Activated CD4-positive, alpha-beta T cell treated with anti-CD3 and anti-CD28 coated beads for 36 hours (primary cell): ENCODE measurements at regions of chr3 and their contacts with region 1.

Region 1: GRCh38 chr3:129249276-129250065 is at the start of gene COPG1:
- DNase-seq: peak; percentile 91
- ATAC-seq: peak; percentile 92
- H3K4me3 Mint-ChIP-seq: peak within 1 kb of the TSS; percentile 96
- H3K27ac Mint-ChIP-seq: peak within 1 kb of the TSS; percentile 96
- H3K4me1 Mint-ChIP-seq: peaks cover 32% of the 10 kb centered on the region
- H3K27me3 Mint-ChIP-seq: no peaks in the 10 kb centered on the region
- total RNA-seq, gene COPG1: 120 to 142 TPM

Region 2: GRCh38 chr3:128993461-128994173 is 255.9 kb before region 1 on chr3 and contains the start of gene CFAP92:
- CTCF ChIA-PET with region 1: interaction called, 3 read pairs
- POLR2A ChIA-PET with region 1: no interaction called
- intact Hi-C with region 1: loop called in 1 of 2 experiments (anchors 1 kb)
- DNase-seq: peak; percentile 95
- ATAC-seq: peak; percentile 97
- H3K4me3 Mint-ChIP-seq: peak within 1 kb of the TSS; percentile 63
- H3K27ac Mint-ChIP-seq: peak within 1 kb of the TSS; percentile 49
- H3K4me1 Mint-ChIP-seq: peaks cover 32% of the 10 kb centered on the region
- H3K27me3 Mint-ChIP-seq: no peaks in the 10 kb centered on the region
- total RNA-seq, gene CFAP92: 0.64 to 0.88 TPM

Region 3: GRCh38 chr3:129026728-129027543 is 222.5 kb before region 1 on chr3:
- CTCF ChIA-PET with region 1: interaction called, 7 read pairs
- POLR2A ChIA-PET with region 1: no interaction called
- intact Hi-C with region 1: loop called in 1 of 2 experiments (anchors 1 kb)
- DNase-seq: peak; percentile 96
- ATAC-seq: peak; percentile 100
- H3K4me3 Mint-ChIP-seq: peak overlapping the region; percentile 72
- H3K27ac Mint-ChIP-seq: peak overlapping the region; percentile 81
- H3K4me1 Mint-ChIP-seq: peaks cover 12% of the 10 kb centered on the region
- H3K27me3 Mint-ChIP-seq: no peaks in the 10 kb centered on the region

Region 4: GRCh38 chr3:129077222-129077621 is 172.2 kb before region 1 on chr3:
- CTCF ChIA-PET with region 1: no interaction called
- POLR2A ChIA-PET with region 1: no interaction called
- intact Hi-C with region 1: no loop called
- DNase-seq: no peak
- ATAC-seq: no peak
- H3K4me3 Mint-ChIP-seq: no peak overlapping the region
- H3K27ac Mint-ChIP-seq: no peak overlapping the region
- H3K4me1 Mint-ChIP-seq: peaks cover 9% of the 10 kb centered on the region
- H3K27me3 Mint-ChIP-seq: no peaks in the 10 kb centered on the region

Region 5: DNA sequence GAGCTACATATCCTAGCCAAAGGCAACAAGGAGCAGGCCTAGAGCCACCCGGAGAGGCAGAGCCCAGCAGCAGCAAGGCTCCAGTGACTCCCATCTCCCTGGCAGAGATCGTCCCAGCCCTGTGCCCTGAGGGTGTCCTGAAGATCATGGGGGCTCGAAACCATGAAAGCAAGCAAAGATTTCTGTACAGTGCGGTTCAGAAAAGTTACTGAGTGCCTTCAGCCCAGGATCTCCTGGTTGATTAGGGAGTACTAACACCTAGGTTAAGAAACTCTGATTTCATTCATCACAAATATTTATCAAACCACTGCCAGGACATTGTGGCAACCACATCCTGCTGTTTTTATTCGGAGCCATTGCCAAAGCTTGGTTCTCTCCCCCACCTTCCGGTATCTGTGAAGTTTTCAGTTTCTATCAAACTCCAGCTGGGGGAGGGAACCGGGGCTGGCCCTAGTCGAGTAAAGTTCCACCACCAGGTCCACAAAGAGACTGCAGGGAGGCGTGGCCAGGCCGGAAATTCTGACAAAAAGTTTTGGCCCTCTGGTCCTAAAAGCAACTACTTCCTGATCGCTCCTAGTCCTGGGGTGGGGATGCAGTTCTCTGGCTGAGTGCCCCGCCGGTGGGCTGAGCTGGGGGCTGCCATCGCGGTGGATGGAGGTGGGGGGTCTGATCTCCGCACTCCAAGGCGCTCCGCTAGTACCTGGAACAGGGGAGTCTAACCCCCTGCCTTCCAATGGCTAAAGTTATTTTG is 129.0 kb before region 1 on chr3:
- CTCF ChIA-PET with region 1: interaction called, 6 read pairs
- POLR2A ChIA-PET with region 1: interaction called, 3 read pairs
- intact Hi-C with region 1: loop called (anchors 1 to 2 kb)
- DNase-seq: peak; percentile 96
- ATAC-seq: peak; percentile 69
- H3K4me3 Mint-ChIP-seq: peak overlapping the region; percentile 91
- H3K27ac Mint-ChIP-seq: peak overlapping the region; percentile 95
- H3K4me1 Mint-ChIP-seq: peaks cover 46% of the 10 kb centered on the region
- H3K27me3 Mint-ChIP-seq: no peaks in the 10 kb centered on the region

Region 6: GRCh38 chr3:129183569-129184395 is 65.7 kb before region 1 on chr3 and contains the start of gene CNBP:
- CTCF ChIA-PET with region 1: interaction called, 26 read pairs
- POLR2A ChIA-PET with region 1: interaction called, 4 read pairs
- intact Hi-C with region 1: loop called (anchors 1 to 2 kb)
- DNase-seq: peak; percentile 96
- ATAC-seq: peak; percentile 95
- H3K4me3 Mint-ChIP-seq: peak within 1 kb of the TSS; percentile 96
- H3K27ac Mint-ChIP-seq: peak within 1 kb of the TSS; percentile 99
- H3K4me1 Mint-ChIP-seq: peaks cover 29% of the 10 kb centered on the region
- H3K27me3 Mint-ChIP-seq: no peaks in the 10 kb centered on the region
- total RNA-seq, gene CNBP: 305 to 379 TPM

Region 7: GRCh38 chr3:129233538-129233937 is 15.9 kb before region 1 on chr3:
- CTCF ChIA-PET with region 1: interaction called, 10 read pairs
- POLR2A ChIA-PET with region 1: interaction called, 3 read pairs
- intact Hi-C with region 1: no loop called
- DNase-seq: no peak
- ATAC-seq: no peak
- H3K4me3 Mint-ChIP-seq: no peak overlapping the region
- H3K27ac Mint-ChIP-seq: no peak overlapping the region
- H3K4me1 Mint-ChIP-seq: peaks cover 13% of the 10 kb centered on the region
- H3K27me3 Mint-ChIP-seq: no peaks in the 10 kb centered on the region

Region 8: GRCh38 chr3:129316131-129317013 is 66.9 kb after region 1 on chr3:
- CTCF ChIA-PET with region 1: interaction called, 8 read pairs
- POLR2A ChIA-PET with region 1: interaction called, 3 read pairs
- intact Hi-C with region 1: loop called in 1 of 2 experiments (anchors 1 kb)
- DNase-seq: peak; percentile 93
- ATAC-seq: peak; percentile 39
- H3K4me3 Mint-ChIP-seq: peak overlapping the region; percentile 88
- H3K27ac Mint-ChIP-seq: peak overlapping the region; percentile 58
- H3K4me1 Mint-ChIP-seq: peaks cover 22% of the 10 kb centered on the region
- H3K27me3 Mint-ChIP-seq: no peaks in the 10 kb centered on the region

Region 9: DNA sequence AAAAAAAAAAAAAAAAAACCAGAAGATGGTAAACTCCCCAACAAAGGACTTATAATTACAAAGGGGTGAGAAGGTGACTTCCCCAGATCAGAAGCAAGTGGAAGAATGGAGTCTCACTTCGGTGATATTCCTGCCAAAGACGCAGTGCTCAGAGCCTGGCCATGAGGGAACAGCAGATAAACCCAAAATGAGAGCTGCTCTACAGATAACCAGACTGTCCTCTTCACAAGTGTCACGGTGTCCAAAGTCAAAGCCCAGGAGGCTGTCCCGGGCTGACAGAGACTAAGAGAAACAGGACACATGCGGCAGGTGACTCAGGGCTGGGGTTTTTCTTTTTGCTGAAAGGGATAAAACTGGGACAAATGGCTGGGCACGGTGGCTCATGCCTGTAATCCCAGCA is 78.0 kb after region 1 on chr3:
- CTCF ChIA-PET with region 1: no interaction called
- POLR2A ChIA-PET with region 1: no interaction called
- intact Hi-C with region 1: no loop called
- DNase-seq: no peak
- ATAC-seq: no peak
- H3K4me3 Mint-ChIP-seq: no peak overlapping the region
- H3K27ac Mint-ChIP-seq: no peak overlapping the region
- H3K4me1 Mint-ChIP-seq: no peaks in the 10 kb centered on the region
- H3K27me3 Mint-ChIP-seq: no peaks in the 10 kb centered on the region